ENCODE measurements at regions of chr11 and their contacts with region 1.

Region 1: GRCh38 chr11:102268329-102269193 is 48.7 kb upstream of the BIRC3 start:
- DNase-seq: peak; percentile 53
- H3K4me3 Mint-ChIP-seq: peak overlapping the region; percentile 67
- H3K27ac Mint-ChIP-seq: no peak overlapping the region
- H3K4me1 Mint-ChIP-seq: peaks cover 28% of the 10 kb centered on the region
- H3K27me3 Mint-ChIP-seq: peaks cover 41% of the 10 kb centered on the region

Region 2: GRCh38 chr11:102109896-102110760 is 158.4 kb before region 1 on chr11 and contains the start of gene YAP1:
- intact Hi-C with region 1: loop called (anchors 5 kb)
- DNase-seq: peak; percentile 55
- H3K4me3 Mint-ChIP-seq: peak within 1 kb of the TSS; percentile 93
- H3K27ac Mint-ChIP-seq: peak within 1 kb of the TSS; percentile 75
- H3K4me1 Mint-ChIP-seq: peaks cover 7% of the 10 kb centered on the region
- H3K27me3 Mint-ChIP-seq: peaks cover 65% of the 10 kb centered on the region
- total RNA-seq, gene YAP1: 0.10 TPM in 2 replicates

Region 3: DNA sequence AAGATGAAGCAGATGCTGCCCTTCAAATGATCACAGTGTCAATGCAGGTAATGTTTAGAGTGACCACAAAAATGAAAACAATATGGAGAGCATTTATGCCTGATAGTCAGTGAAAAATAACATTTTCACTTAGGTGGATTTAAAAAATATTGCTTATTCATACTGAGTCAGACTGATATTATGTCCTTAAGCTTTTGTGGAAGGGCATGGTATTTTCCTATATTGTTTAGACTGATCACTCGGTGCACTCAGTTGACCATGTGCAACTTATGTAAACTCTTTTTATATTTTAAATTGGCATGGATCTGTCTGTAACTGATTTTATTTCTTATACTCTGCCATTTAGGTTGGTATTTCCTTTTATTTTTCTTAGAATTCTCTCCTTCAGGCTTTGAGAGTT is 947.3 kb after region 1 on chr11:
- intact Hi-C with region 1: no loop called
- DNase-seq: no peak
- H3K4me3 Mint-ChIP-seq: no peak overlapping the region
- H3K27ac Mint-ChIP-seq: no peak overlapping the region
- H3K4me1 Mint-ChIP-seq: no peaks in the 10 kb centered on the region
- H3K27me3 Mint-ChIP-seq: no peaks in the 10 kb centered on the region